CD4-positive, alpha-beta T cell (primary cell): ENCODE measurements at regions of chr2 and their contacts with region 1.

Region 1: GRCh38 chr2:19347619-19348562 is 10.5 kb downstream of the OSR1 start:
- DNase-seq: peak; percentile 89 to 98 (median 96)
- ATAC-seq: peak; percentile 87
- H3K4me3 ChIP-seq: peak overlapping the region; percentile 93
- H3K4me3 Mint-ChIP-seq: peak overlapping the region; percentile 93
- H3K27ac ChIP-seq: peak overlapping the region; percentile 81 to 89
- H3K27ac Mint-ChIP-seq: peak overlapping the region; percentile 97
- H3K4me1 ChIP-seq: peaks cover 46% of the 10 kb centered on the region
- H3K4me1 Mint-ChIP-seq: peaks cover 49% of the 10 kb centered on the region
- H3K27me3 ChIP-seq: peaks cover 39 to 46% of the 10 kb centered on the region in 2 experiments
- H3K27me3 Mint-ChIP-seq: peaks cover 47% of the 10 kb centered on the region
- CTCF ChIP-seq: no peak

Region 2: DNA sequence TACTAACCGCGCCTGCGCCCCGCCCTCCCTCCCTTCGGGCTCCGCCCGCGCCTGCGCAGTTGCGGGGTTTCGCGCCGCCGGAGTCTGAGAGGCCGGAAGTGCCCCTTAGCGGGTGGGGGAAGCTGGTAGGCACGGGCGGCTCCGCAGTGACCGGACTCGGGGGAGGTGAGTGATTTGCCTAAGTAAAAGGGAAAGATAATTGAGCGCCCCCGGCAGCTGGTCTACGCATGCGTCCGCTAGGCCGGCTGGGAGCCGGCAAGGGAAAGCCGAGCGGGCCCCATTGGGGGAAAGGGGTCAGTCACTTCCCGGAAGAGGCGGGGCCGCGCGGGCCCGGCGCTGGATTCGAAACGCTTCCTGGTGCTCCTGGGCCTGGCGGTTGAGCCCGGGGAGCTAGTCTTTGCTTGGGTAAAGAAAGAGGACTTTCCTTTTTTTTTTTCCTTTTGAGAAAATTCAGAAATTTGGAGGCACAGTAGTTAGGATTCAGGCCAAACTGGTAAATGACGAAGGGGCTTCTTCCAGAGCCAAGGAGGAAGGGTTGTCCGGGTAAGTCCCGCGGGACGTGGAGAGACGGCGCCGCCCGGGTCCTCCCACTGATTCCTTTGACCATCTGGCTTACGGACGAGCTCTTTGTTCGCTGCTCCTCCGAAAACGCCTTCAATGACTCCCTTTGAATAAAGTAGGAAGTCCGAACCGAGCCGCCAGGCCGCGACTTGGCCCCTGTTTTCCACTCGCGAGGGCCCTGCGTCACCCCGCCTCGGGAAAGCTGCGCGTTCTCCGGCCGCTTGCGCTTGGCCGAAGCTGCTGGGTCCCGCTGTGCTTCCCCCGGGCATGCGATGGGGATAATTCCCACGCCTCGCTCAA is 1593.9 kb before region 1 on chr2 and contains the starts of genes GEN1 and SMC6:
- CTCF ChIA-PET with region 1: no interaction called
- POLR2A ChIA-PET with region 1: interaction called, 4 read pairs
- intact Hi-C with region 1: loop called (anchors 5 to 10 kb)
- DNase-seq: peak; percentile 83 to 94 (median 89)
- ATAC-seq: peak; percentile 81
- H3K4me3 ChIP-seq: peak within 1 kb of the TSS; percentile 88
- H3K4me3 Mint-ChIP-seq: peak within 1 kb of the TSS; percentile 96
- H3K27ac ChIP-seq: peak within 1 kb of the TSS; percentile 93 to 98
- H3K27ac Mint-ChIP-seq: peak within 1 kb of the TSS; percentile 97
- H3K4me1 ChIP-seq: peaks cover 11% of the 10 kb centered on the region
- H3K4me1 Mint-ChIP-seq: peaks cover 27% of the 10 kb centered on the region
- H3K27me3 ChIP-seq: no peaks in the 10 kb centered on the region
- H3K27me3 Mint-ChIP-seq: no peaks in the 10 kb centered on the region
- CTCF ChIP-seq: no peak
- total RNA-seq, gene GEN1: 4.3 to 4.6 TPM
- total RNA-seq, gene SMC6: 7.1 to 7.8 TPM

Region 3: DNA sequence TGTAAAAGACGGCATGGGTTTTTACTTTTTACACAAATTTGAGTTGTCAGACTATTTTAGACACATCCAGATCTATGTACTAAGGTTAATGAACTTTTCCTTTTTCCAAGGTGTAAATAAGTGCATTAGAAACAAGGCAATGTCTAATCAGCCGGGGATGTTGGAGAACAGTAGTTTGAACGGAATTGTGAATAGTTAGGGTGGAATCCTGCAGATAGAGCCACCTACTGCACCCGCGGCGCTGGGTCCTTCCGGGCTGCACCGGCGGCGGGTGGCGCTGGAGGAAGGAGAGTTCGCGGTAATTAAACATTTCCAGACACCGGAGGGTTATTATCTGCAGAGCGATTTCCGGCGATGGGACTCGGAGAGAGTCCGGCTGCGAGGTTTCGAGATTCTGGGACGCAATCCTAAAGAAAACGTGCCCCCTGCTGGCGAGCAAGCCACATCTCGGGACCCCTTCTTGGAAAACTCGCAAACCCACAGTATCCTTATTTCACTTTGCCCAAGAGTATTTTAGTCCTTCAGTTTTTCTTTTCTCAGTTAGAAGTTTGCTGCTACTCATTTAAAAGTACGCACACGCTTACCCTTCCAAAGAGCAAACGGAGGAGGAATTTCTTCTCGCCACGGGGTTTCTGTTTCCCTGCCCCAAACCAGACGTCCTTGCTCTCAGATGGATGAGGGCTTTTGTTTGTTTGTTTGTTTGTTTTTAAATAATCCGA is 15.0 kb after region 1 on chr2:
- CTCF ChIA-PET with region 1: interaction called, 4 read pairs
- POLR2A ChIA-PET with region 1: interaction called, 69 read pairs
- intact Hi-C with region 1: loop called in 1 of 2 experiments (anchors 1 kb)
- DNase-seq: peak in 8 of 14 experiments; percentile 25 to 68 (median 58)
- ATAC-seq: peak; percentile 47
- H3K4me3 ChIP-seq: peak overlapping the region; percentile 71
- H3K4me3 Mint-ChIP-seq: peak overlapping the region; percentile 91
- H3K27ac ChIP-seq: no peak overlapping the region
- H3K27ac Mint-ChIP-seq: peak overlapping the region; percentile 63
- H3K4me1 ChIP-seq: peaks cover 40% of the 10 kb centered on the region
- H3K4me1 Mint-ChIP-seq: peaks cover 46% of the 10 kb centered on the region
- H3K27me3 ChIP-seq: peaks cover 36% of the 10 kb centered on the region in 2 experiments
- H3K27me3 Mint-ChIP-seq: peaks cover 65% of the 10 kb centered on the region
- CTCF ChIP-seq: peak; percentile 46

Region 4: GRCh38 chr2:19901442-19902215 is 553.7 kb after region 1 on chr2 and contains the start of gene TTC32:
- CTCF ChIA-PET with region 1: no interaction called
- POLR2A ChIA-PET with region 1: interaction called, 13 read pairs
- intact Hi-C with region 1: loop called in 1 of 2 experiments (anchors 2 kb)
- DNase-seq: peak; percentile 90 to 96 (median 92)
- ATAC-seq: peak; percentile 85
- H3K4me3 ChIP-seq: peak within 1 kb of the TSS; percentile 72
- H3K4me3 Mint-ChIP-seq: peak within 1 kb of the TSS; percentile 93
- H3K27ac ChIP-seq: peak within 1 kb of the TSS; percentile 94 to 97
- H3K27ac Mint-ChIP-seq: peak within 1 kb of the TSS; percentile 91
- H3K4me1 ChIP-seq: peaks cover 14% of the 10 kb centered on the region
- H3K4me1 Mint-ChIP-seq: peaks cover 40% of the 10 kb centered on the region
- H3K27me3 ChIP-seq: peaks cover 0 to 5% of the 10 kb centered on the region in 2 experiments
- H3K27me3 Mint-ChIP-seq: peaks cover 8% of the 10 kb centered on the region
- CTCF ChIP-seq: no peak
- total RNA-seq, gene TTC32: 53.1 to 54.2 TPM

Region 5: GRCh38 chr2:20051532-20052228 is 703.8 kb after region 1 on chr2 and contains the start of gene LAPTM4A:
- CTCF ChIA-PET with region 1: no interaction called
- POLR2A ChIA-PET with region 1: no interaction called
- intact Hi-C with region 1: loop called (anchors 2 to 5 kb)
- DNase-seq: peak; percentile 93 to 100 (median 96)
- ATAC-seq: peak; percentile 90
- H3K4me3 ChIP-seq: peak within 1 kb of the TSS; percentile 87
- H3K4me3 Mint-ChIP-seq: no peak within 1 kb of the TSS
- H3K27ac ChIP-seq: peak within 1 kb of the TSS; percentile 94 to 99
- H3K27ac Mint-ChIP-seq: no peak within 1 kb of the TSS
- H3K4me1 ChIP-seq: peaks cover 28% of the 10 kb centered on the region
- H3K4me1 Mint-ChIP-seq: peaks cover 29% of the 10 kb centered on the region
- H3K27me3 ChIP-seq: peaks cover 6 to 9% of the 10 kb centered on the region in 2 experiments
- H3K27me3 Mint-ChIP-seq: peaks cover 25% of the 10 kb centered on the region
- CTCF ChIP-seq: no peak
- total RNA-seq, gene LAPTM4A: 59.4 to 62.0 TPM